ENCODE measurements at regions of chr13 and their contacts with region 1.

Region 1: GRCh38 chr13:113458253-113459065 is 5.2 kb upstream of the ADPRHL1 start:
- DNase-seq: peak in 1 of 9 experiments; percentile 28
- ATAC-seq: no peak
- H3K4me3 ChIP-seq: no peak overlapping the region
- H3K4me3 Mint-ChIP-seq: no peak overlapping the region
- H3K27ac ChIP-seq: no peak overlapping the region
- H3K27ac Mint-ChIP-seq: no peak overlapping the region
- H3K4me1 ChIP-seq: no peaks in the 10 kb centered on the region
- H3K4me1 Mint-ChIP-seq: no peaks in the 10 kb centered on the region
- H3K27me3 ChIP-seq: no peaks in the 10 kb centered on the region
- H3K27me3 Mint-ChIP-seq: no peaks in the 10 kb centered on the region
- CTCF ChIP-seq: no peak

Region 2: GRCh38 chr13:113049521-113049941 is 408.9 kb before region 1 on chr13:
- CTCF ChIA-PET with region 1: no interaction called
- POLR2A ChIA-PET with region 1: no interaction called
- intact Hi-C with region 1: no loop called
- DNase-seq: no peak
- ATAC-seq: no peak
- H3K4me3 ChIP-seq: no peak overlapping the region
- H3K4me3 Mint-ChIP-seq: no peak overlapping the region
- H3K27ac ChIP-seq: no peak overlapping the region
- H3K27ac Mint-ChIP-seq: no peak overlapping the region
- H3K4me1 ChIP-seq: no peaks in the 10 kb centered on the region
- H3K4me1 Mint-ChIP-seq: no peaks in the 10 kb centered on the region
- H3K27me3 ChIP-seq: no peaks in the 10 kb centered on the region
- H3K27me3 Mint-ChIP-seq: no peaks in the 10 kb centered on the region
- CTCF ChIP-seq: no peak

Region 3: DNA sequence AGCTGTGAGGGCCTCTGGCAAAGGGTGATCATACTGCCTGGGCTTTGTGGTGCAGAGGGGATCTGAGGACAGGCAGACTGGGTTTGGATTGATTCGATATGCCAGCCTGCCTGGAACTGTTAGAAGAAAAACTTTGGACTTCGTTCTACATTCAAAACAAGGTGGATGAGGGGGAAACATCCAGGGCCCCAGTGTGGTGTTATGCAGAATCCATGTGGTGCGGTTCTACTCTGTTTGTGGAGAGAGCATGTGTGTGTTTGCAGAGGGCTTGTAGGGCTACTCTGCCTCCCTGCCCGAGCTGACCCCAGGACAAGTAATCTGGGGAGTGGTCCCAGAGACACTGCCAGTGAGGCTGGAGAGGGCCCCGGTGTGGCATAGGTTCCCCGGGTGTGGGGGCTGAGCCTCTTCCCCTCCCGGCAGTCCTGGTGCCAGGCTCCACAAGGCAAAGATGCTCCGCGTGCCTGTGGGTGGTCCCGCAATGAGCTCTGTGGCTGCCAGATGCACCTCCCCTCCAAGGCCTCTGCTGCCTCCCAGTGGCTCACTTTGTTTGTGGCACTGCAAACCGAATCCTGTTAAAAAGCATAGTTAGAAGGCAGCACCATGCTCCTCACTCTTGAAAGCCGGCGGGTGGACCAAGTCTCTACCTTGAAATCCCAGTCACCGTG is 103.8 kb after region 1 on chr13:
- CTCF ChIA-PET with region 1: interaction called, 8 read pairs
- POLR2A ChIA-PET with region 1: no interaction called
- intact Hi-C with region 1: loop called in 1 of 2 experiments (anchors 2 kb)
- DNase-seq: peak; percentile 17 to 63 (median 49)
- ATAC-seq: peak; percentile 72
- H3K4me3 ChIP-seq: no peak overlapping the region
- H3K4me3 Mint-ChIP-seq: no peak overlapping the region
- H3K27ac ChIP-seq: no peak overlapping the region
- H3K27ac Mint-ChIP-seq: no peak overlapping the region
- H3K4me1 ChIP-seq: no peaks in the 10 kb centered on the region
- H3K4me1 Mint-ChIP-seq: peaks cover 3% of the 10 kb centered on the region
- H3K27me3 ChIP-seq: no peaks in the 10 kb centered on the region
- H3K27me3 Mint-ChIP-seq: peaks cover 7% of the 10 kb centered on the region
- CTCF ChIP-seq: peak; percentile 56

Region 4: GRCh38 chr13:113863436-113864272 is 405.2 kb after region 1 on chr13 and contains the start of gene GAS6:
- CTCF ChIA-PET with region 1: no interaction called
- POLR2A ChIA-PET with region 1: no interaction called
- intact Hi-C with region 1: no loop called
- DNase-seq: peak in 3 of 9 experiments; percentile 31 to 57 (median 35)
- ATAC-seq: peak; percentile 54
- H3K4me3 ChIP-seq: peak within 1 kb of the TSS; percentile 26 to 45
- H3K4me3 Mint-ChIP-seq: peak within 1 kb of the TSS; percentile 73
- H3K27ac ChIP-seq: no peak within 1 kb of the TSS
- H3K27ac Mint-ChIP-seq: no peak within 1 kb of the TSS
- H3K4me1 ChIP-seq: peaks cover 13% of the 10 kb centered on the region
- H3K4me1 Mint-ChIP-seq: peaks cover 12% of the 10 kb centered on the region
- H3K27me3 ChIP-seq: peaks cover 12 to 27% of the 10 kb centered on the region in 2 experiments
- H3K27me3 Mint-ChIP-seq: peaks cover 45% of the 10 kb centered on the region
- CTCF ChIP-seq: no peak
- total RNA-seq, gene GAS6: 1.2 TPM

Measured in CD8-positive, alpha-beta T cell (primary cell).